Gastrocnemius medialis (tissue), 4 donors: ENCODE measurements at regions of chr15 and their contacts with region 1.

Region 1: GRCh38 chr15:76057332-76058000 is 2.3 kb upstream of the TMEM266 start:
- DNase-seq: no peak
- ATAC-seq: no peak
- H3K4me3 ChIP-seq: peak overlapping the region in 3 of 4 donors; percentile 14 to 46 (median 24)
- H3K27ac ChIP-seq: peak overlapping the region in 2 of 4 donors; percentile 3 to 33
- H3K4me1 ChIP-seq: peaks cover 5 to 17% of the 10 kb centered on the region in 2 donors
- H3K27me3 ChIP-seq: peaks cover 0 to 3% (median 0%) of the 10 kb centered on the region in 3 donors
- CTCF ChIP-seq: peak; percentile 42 to 81 (median 68)
- POLR2A ChIP-seq: no peak

Region 2: DNA sequence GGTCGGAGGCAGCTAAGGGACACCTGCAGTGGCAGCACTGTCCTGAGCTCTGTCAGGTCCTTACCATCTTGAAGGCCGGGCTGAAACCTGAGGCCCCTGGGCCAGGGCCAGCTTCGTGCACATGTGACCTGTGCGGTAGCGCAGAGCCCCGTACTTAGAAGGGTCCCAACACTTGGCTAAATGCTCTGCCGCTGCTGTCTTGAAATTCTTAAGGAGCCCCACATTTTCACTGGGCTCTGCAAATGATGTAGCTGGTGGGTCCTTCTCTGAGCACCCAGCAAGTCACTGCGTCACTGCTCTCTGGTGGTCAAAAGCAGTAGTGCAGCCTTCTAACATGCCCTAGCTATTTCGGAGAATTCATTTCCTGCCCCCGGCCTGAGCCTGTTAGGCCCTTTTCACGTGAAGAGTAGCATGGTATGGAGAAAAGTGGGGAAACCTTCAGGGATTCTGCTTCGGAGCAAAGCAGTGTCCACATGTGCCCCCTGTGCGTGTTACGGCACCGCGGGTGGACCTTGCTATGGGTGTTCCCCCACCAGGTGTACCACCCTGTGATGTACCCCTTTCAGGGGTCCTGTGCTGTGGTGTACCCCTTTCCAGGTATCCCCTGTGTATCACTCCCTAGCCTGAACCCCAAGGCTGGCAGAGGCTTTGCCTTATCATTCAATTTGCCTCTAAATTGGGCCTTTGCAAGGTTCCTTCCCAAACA is 82.1 kb after region 1 on chr15:
- in situ Hi-C with region 1: loop called (anchors 5 to 10 kb)
- intact Hi-C with region 1: loop called (anchors 1 kb)
- DNase-seq: peak; percentile 26 to 64
- ATAC-seq: peak; percentile 86 to 90
- H3K4me3 ChIP-seq: no peak overlapping the region
- H3K27ac ChIP-seq: no peak overlapping the region
- H3K4me1 ChIP-seq: peaks cover 0 to 4% of the 10 kb centered on the region in 2 donors
- H3K27me3 ChIP-seq: no peaks in the 10 kb centered on the region
- CTCF ChIP-seq: peak; percentile 91 to 95 (median 95)
- POLR2A ChIP-seq: no peak